ENCODE measurements at regions of chr19 and their contacts with region 1.

Region 1: DNA sequence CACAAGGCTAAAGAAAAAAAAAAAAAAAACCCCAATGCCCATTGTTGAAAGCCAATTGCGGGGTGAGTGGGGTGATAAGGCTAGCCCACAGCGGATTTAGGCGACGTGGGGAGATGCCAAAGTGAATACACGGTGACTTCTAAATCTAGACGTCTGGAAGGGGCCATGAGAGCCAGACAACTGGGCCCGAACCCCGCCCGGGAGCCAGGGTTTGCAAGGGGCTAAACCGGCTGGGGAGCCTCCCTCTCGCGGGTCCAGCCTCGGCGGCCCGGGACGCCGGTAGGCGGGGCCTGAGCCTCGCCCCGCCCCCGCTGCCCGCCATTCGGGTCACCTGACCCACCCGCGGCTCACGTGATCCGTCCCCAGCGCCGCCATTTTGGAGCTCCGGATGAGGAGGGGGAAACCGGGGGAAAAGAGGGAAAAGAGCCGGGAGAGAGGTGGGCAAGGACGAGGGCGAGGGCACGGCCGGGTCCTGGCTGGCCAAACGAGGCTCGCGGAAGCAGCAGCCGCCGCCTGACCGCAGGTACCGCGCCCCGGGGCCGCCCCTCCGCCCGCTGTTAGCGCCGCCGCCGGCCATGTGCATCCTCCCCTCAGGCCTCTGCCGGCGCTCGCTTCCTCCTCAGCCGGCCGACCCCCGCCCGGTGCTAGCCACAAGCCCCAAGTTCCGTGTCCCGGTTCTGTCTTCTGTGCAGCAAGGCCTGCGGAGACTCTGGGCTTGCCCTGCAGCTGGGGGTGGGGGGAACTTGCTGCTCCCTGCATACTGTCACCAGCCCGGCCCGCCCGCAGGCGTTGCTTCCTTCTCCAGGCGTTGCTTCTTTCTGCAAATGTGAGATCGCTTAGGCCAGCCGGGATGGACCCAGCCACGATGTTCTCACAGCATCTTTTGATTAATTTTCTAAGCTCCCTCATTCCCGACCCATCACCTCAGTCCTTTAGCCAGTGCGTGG is at the start of gene ZNF507:
- DNase-seq: peak; percentile 62
- H3K4me3 ChIP-seq: peak within 1 kb of the TSS; percentile 89 to 96
- H3K27ac ChIP-seq: peak within 1 kb of the TSS; percentile 91 to 92
- H3K4me1 ChIP-seq: peaks cover 12% of the 10 kb centered on the region
- H3K27me3 ChIP-seq: no peaks in the 10 kb centered on the region
- CTCF ChIP-seq: peak in 2 of 4 experiments; percentile 7 to 25
- POLR2A ChIP-seq: no peak
- total RNA-seq, gene ZNF507: 19.0 to 37.5 TPM

Region 2: DNA sequence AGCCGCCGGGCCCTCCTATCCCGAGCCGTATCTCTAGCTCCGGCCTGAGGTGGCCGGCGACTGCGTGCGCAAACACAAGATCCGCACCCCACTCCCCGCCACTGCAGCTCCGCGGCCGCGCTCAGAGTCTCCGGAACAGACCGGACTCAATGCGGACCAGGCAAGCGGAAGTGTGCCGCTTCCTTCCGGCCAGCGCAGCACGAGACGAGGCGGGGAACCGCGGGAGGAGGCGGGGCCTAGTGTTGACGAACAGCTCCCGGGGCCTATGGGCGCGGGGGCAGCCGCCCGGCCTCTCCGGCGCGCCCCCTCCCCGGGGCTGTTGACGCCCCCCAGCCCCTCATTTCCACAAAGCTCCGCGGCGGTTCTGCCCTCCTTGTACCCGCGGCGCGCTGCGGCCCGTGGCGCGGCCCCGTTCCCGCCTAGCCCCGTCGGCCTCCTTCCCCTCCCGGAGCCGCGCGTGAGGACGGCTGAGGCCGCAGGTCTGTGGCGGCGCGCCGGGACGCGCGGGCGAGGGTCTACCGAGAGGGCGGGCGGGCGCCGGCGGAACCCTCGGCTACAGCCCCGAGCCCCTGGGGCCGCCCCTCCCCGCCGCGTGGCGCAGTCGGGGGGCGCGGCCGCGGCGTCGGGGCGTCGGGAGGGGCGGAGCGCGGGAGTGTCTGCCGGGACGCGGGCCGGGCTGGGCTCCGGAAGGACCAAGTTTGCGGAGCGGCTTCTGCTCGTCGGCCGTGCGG is 60.1 kb after region 1 on chr19 and contains the start of gene DPY19L3:
- intact Hi-C with region 1: loop called (anchors 5 kb)
- DNase-seq: peak; percentile 95
- H3K4me3 ChIP-seq: peak within 1 kb of the TSS; percentile 99
- H3K27ac ChIP-seq: peak within 1 kb of the TSS; percentile 98 to 99
- H3K4me1 ChIP-seq: peaks cover 5% of the 10 kb centered on the region
- H3K27me3 ChIP-seq: no peaks in the 10 kb centered on the region
- CTCF ChIP-seq: no peak
- POLR2A ChIP-seq: peak; percentile 85
- total RNA-seq, gene DPY19L3: 53.0 to 66.5 TPM

Region 3: DNA sequence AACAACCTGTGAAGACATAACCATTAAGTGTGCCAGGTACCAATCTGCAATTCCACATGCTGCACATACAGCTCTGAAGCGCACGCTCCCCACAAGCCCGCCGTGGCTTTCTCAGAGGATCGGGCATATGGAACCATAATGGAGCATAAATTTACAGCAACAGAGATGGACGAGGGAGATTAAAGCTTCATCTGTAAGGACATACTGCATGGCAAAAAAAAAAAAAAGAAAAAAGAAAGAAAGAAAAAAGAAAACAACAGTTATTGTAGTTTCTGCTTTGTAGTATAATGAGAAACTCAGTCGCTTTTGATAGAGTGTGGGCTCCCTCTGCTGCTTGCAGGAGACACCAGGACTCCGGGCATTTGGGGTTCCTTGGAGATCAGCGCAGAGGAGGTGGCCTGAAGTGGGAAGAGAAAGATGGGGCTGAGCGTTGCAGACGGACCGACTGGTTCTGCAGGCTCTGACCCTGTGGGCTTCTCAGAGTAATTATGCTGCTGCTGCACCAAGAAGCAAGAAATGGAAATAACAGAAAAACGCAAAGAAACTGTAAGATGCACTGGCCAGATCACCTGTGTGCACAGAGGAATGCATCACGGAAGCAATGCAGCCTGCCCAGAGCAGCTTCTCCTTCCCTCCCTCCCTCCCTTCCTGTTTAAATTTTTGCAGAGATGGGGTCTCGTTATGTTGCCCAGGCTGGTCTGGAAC is 224.7 kb after region 1 on chr19:
- intact Hi-C with region 1: loop called (anchors 10 kb)
- DNase-seq: peak; percentile 51
- H3K4me3 ChIP-seq: no peak overlapping the region
- H3K27ac ChIP-seq: no peak overlapping the region
- H3K4me1 ChIP-seq: no peaks in the 10 kb centered on the region
- H3K27me3 ChIP-seq: no peaks in the 10 kb centered on the region
- CTCF ChIP-seq: peak in 3 of 4 experiments; percentile 52 to 61 (median 58)
- POLR2A ChIP-seq: no peak

Region 4: GRCh38 chr19:32674959-32675719 is 329.6 kb after region 1 on chr19 and contains the start of gene ANKRD27:
- intact Hi-C with region 1: loop called (anchors 10 kb)
- DNase-seq: peak; percentile 98
- H3K4me3 ChIP-seq: peak within 1 kb of the TSS; percentile 89 to 94
- H3K27ac ChIP-seq: peak within 1 kb of the TSS; percentile 85 to 87
- H3K4me1 ChIP-seq: peaks cover 3% of the 10 kb centered on the region
- H3K27me3 ChIP-seq: no peaks in the 10 kb centered on the region
- CTCF ChIP-seq: no peak
- POLR2A ChIP-seq: peak; percentile 38
- total RNA-seq, gene ANKRD27: 25.7 to 51.4 TPM